Colonic mucosa (tissue), 4 donors: ENCODE measurements at regions of chr3 and their contacts with region 1.

Region 1: DNA sequence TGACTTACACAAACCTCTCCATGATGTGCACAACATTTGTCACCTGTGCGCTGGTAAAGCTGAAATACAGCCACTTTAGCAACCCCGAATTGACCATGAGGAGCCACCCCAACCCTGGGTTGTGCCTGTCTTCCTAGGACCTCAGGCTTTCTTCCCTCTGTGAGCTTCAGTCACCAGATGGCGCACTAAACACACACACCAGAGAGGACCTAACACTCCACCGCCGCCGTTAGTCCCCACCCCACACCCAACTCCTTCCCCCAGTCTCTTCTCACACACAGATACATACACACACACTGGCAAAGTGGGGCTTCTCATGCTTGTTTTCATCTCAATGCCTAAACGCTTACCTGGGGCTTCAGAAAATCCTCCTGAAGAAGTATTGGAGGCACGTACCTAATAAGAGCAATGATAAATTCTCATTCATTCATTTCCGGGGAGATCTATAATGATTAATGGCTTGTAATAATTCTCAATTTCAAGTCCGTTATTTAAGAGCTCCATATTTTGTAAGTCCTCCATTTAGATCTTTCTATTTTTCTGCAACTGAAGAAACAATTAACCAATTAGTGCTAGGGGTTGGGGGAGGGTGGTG is 2.1 kb upstream of the CCDC80 start:
- DNase-seq: peak; percentile 82
- H3K4me3 ChIP-seq: no peak overlapping the region
- H3K27ac ChIP-seq: no peak overlapping the region
- H3K4me1 ChIP-seq: peaks cover 4% of the 10 kb centered on the region
- H3K27me3 ChIP-seq: no peaks in the 10 kb centered on the region
- CTCF ChIP-seq: peak; percentile 63

Region 2: DNA sequence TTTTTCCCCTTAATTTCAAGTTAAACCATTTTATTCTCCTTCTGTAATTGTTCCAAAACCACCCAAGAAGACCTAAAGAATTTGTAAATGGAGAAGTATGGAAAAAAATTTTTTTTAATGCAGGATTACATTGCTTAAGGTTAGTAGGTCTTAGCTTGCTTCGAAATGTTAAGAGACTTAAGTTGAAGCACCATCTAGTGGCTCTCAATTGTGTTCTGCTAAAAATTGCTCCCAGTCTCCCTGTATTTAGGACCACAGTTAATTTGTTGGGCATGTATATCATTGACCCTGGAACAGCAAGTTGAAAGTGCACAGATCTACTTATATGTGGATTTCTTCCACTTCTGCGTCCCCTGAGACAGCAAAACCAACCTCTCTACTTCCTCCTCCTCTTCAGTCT is 171.3 kb after region 1 on chr3:
- intact Hi-C with region 1: loop called (anchors 5 kb)
- DNase-seq: no peak
- H3K4me3 ChIP-seq: no peak overlapping the region
- H3K27ac ChIP-seq: no peak overlapping the region
- H3K4me1 ChIP-seq: no peaks in the 10 kb centered on the region
- H3K27me3 ChIP-seq: no peaks in the 10 kb centered on the region
- CTCF ChIP-seq: no peak

Region 3: GRCh38 chr3:112979240-112979832 is 336.3 kb after region 1 on chr3:
- intact Hi-C with region 1: loop called (anchors 2 kb)
- DNase-seq: no peak
- H3K4me3 ChIP-seq: no peak overlapping the region
- H3K27ac ChIP-seq: no peak overlapping the region
- H3K4me1 ChIP-seq: no peaks in the 10 kb centered on the region
- H3K27me3 ChIP-seq: no peaks in the 10 kb centered on the region
- CTCF ChIP-seq: peak; percentile 63

Region 4: GRCh38 chr3:113441051-113441770 is 798.2 kb after region 1 on chr3 and contains the start of gene CFAP44:
- intact Hi-C with region 1: no loop called
- DNase-seq: peak; percentile 85
- H3K4me3 ChIP-seq: peak within 1 kb of the TSS; percentile 4
- H3K27ac ChIP-seq: no peak within 1 kb of the TSS
- H3K4me1 ChIP-seq: no peaks in the 10 kb centered on the region
- H3K27me3 ChIP-seq: no peaks in the 10 kb centered on the region
- CTCF ChIP-seq: no peak
- total RNA-seq, gene CFAP44: 5.4 to 8.5 TPM